ENCODE measurements at regions of chr4 and their contacts with region 1.

Region 1: DNA sequence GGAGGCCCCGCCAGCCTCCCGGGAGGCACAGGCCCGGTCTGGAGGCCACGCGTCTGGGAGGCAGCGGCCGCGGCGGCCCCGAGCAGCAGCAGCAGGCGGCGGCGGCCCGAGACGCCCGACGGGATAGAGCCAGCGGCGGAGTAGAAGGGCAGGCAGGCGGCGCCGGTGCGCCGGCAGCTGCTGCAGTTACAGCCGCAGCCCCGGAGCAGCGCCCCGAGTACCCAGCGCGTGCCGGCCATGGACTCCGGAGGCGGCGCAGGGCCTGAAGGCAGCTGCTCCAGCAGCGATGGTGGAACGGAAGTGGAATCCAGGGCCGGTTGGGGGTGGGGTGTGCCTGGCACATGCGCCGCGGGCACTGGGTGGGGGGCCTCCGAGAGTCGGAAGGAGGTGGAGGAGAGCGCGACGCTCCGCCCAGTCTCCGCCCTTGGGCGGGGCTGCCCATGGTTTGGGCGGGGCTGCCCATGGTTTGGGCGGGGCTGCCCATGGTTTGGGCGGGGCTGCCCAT is at the start of gene GRSF1:
- DNase-seq: peak; percentile 95 to 97
- ATAC-seq: peak; percentile 95 to 97 (median 96)
- H3K4me3 ChIP-seq: peak within 1 kb of the TSS; percentile 95
- H3K27ac ChIP-seq: peak within 1 kb of the TSS; percentile 97
- H3K4me1 ChIP-seq: peaks cover 19% of the 10 kb centered on the region
- H3K27me3 ChIP-seq: no peaks in the 10 kb centered on the region
- CTCF ChIP-seq: peak; percentile 21
- total RNA-seq, gene GRSF1: 114 to 144 (median 130) TPM

Region 2: GRCh38 chr4:70704331-70705145 is 135.1 kb before region 1 on chr4:
- intact Hi-C with region 1: loop called (anchors 1 to 5 kb)
- DNase-seq: peak; percentile 86 to 87
- ATAC-seq: peak; percentile 73 to 84 (median 76)
- H3K4me3 ChIP-seq: peak overlapping the region; percentile 85
- H3K27ac ChIP-seq: peak overlapping the region; percentile 98
- H3K4me1 ChIP-seq: peaks cover 20% of the 10 kb centered on the region
- H3K27me3 ChIP-seq: no peaks in the 10 kb centered on the region
- CTCF ChIP-seq: peak; percentile 33

Region 3: DNA sequence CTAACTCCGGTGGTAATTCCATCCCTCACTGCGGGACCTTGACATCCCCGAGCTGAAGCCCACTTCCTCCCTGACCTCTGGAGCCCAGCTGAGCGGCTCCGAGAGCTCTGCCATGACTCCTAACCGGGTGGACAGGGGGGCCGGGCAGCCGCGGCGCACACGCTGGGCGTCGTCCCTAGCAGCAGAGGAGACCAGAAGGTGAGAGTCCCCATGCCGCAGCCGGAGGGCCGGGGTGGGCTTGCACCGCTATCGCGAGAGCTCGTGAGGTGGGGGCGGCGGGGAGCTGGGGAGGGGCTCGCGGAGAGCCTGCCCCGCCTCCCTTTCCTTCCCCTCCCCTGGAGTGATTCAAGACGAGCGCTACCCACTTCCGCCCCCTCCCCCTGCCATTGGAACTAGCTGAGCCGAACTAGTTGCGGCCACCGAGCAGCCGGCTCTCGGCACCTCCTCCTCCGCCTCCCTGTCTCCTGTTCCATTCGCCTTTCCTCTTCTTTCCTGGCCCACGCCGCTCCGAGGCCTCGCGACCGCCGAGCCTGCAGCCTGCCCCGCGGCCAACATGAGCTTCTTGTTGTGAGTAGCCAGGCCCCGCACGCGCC is 62.4 kb after region 1 on chr4 and contains the start of gene MOB1B:
- intact Hi-C with region 1: loop called in 1 of 2 experiments (anchors 2 kb)
- DNase-seq: peak; percentile 87 to 90
- ATAC-seq: peak; percentile 95 to 97 (median 96)
- H3K4me3 ChIP-seq: peak within 1 kb of the TSS; percentile 90
- H3K27ac ChIP-seq: peak within 1 kb of the TSS; percentile 85
- H3K4me1 ChIP-seq: peaks cover 4% of the 10 kb centered on the region
- H3K27me3 ChIP-seq: no peaks in the 10 kb centered on the region
- CTCF ChIP-seq: peak; percentile 43
- total RNA-seq, gene MOB1B: 9.8 to 22.3 (median 12.8) TPM

Measured in psoas muscle (tissue), 8 donors.